Heart right ventricle (tissue), 16 donors: ENCODE measurements at regions of chr18 and their contacts with region 1.

Region 1: DNA sequence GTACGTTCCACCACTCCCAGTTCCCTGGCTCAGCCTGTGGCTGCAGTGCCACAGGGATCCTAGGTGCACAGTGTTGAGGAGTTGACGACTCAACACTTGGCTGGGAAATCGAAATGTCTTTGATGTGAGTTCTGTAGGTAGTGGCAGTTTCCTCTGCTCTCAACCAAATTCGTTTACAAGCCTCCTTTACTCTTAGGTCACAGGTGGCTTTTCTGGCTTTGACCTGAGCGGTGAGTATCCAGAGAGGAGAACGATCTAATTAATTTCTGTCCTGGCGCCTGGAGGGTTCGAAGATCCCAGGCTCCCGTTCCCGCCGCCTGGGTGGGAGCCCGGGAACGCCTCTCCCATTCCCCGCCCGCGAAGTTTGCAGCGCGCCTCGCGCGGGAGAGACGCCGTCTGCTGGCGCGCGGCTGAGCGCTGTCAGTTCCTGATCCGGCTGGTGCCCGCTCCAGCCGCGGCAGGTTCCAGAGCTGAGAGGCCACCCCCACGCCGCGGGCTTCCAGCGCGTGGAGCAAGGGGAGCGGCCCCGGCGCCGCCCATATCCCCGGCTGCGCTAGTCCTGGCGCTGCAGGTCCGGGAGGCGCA is at the start of gene LAMA3:
- DNase-seq: peak; percentile 45 to 71
- ATAC-seq: peak; percentile 88 to 94 (median 91)
- H3K4me3 ChIP-seq: peak within 1 kb of the TSS; percentile 53 to 76 (median 65)
- H3K27ac ChIP-seq: peak within 1 kb of the TSS in 9 of 10 donors; percentile 29 to 74 (median 53)
- H3K4me1 ChIP-seq: peaks cover 0 to 29% (median 19%) of the 10 kb centered on the region in 9 donors
- H3K27me3 ChIP-seq: peaks cover 0 to 32% (median 9%) of the 10 kb centered on the region in 7 donors
- CTCF ChIP-seq: peak in 6 of 9 donors; percentile 16 to 59 (median 48)
- total RNA-seq, gene LAMA3: 0.89 to 5.3 (median 3.3) TPM

Region 2: DNA sequence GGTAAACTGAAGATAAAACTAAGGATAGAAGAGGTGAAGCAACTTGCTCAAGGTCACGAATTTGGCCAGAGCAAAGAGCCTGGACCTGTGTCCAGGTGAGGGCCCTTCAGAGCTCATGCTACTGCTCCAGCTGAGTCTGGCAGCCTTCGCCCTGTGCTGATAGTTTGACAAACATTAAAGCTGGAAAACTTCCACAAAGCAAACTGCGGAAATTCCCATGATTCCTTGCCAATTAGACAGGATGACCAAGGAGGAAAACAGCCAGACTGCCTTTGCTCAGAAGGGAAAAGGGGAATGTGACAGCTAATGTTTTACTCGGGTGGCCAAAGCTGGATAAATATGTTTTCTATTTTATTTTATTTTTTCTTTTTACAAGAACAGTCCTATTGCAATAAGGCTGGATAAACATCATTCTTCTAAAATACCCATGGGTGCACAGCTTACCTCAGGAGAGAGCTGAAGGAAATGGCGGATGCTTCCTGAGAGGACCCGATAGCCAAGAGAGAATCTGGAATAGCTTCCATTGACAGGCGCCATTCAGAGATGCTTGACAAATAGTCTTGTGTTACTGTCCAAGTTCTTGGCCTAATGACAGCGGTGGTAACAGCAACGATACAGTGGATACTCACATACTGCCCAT is 1266.1 kb before region 1 on chr18:
- intact Hi-C with region 1: no loop called
- DNase-seq: peak; percentile 22 to 47
- ATAC-seq: peak in 7 of 8 donors; percentile 38 to 76 (median 46)
- H3K4me3 ChIP-seq: no peak overlapping the region
- H3K27ac ChIP-seq: peak overlapping the region in 8 of 10 donors; percentile 8 to 75 (median 45)
- H3K4me1 ChIP-seq: peaks cover 0 to 22% (median 14%) of the 10 kb centered on the region in 9 donors
- H3K27me3 ChIP-seq: no peaks in the 10 kb centered on the region
- CTCF ChIP-seq: no peak

Region 3: GRCh38 chr18:23337599-23338444 is 351.3 kb before region 1 on chr18:
- intact Hi-C with region 1: no loop called
- DNase-seq: no peak
- ATAC-seq: no peak
- H3K4me3 ChIP-seq: no peak overlapping the region
- H3K27ac ChIP-seq: no peak overlapping the region
- H3K4me1 ChIP-seq: peaks cover 0 to 23% (median 7%) of the 10 kb centered on the region in 9 donors
- H3K27me3 ChIP-seq: no peaks in the 10 kb centered on the region
- CTCF ChIP-seq: no peak

Region 4: GRCh38 chr18:23503038-23503962 is 185.8 kb before region 1 on chr18 and contains the start of gene RMC1:
- intact Hi-C with region 1: loop called in 1 of 10 experiments (anchors 10 kb)
- DNase-seq: peak; percentile 97 to 99
- ATAC-seq: peak; percentile 98 to 99 (median 99)
- H3K4me3 ChIP-seq: peak within 1 kb of the TSS; percentile 85 to 99 (median 96)
- H3K27ac ChIP-seq: peak within 1 kb of the TSS; percentile 57 to 96 (median 94)
- H3K4me1 ChIP-seq: peaks cover 0 to 44% (median 28%) of the 10 kb centered on the region in 9 donors
- H3K27me3 ChIP-seq: no peaks in the 10 kb centered on the region
- CTCF ChIP-seq: peak in 4 of 9 donors; percentile 10 to 33 (median 26)
- total RNA-seq, gene RMC1: 12.4 to 21.6 (median 14.5) TPM

Region 5: DNA sequence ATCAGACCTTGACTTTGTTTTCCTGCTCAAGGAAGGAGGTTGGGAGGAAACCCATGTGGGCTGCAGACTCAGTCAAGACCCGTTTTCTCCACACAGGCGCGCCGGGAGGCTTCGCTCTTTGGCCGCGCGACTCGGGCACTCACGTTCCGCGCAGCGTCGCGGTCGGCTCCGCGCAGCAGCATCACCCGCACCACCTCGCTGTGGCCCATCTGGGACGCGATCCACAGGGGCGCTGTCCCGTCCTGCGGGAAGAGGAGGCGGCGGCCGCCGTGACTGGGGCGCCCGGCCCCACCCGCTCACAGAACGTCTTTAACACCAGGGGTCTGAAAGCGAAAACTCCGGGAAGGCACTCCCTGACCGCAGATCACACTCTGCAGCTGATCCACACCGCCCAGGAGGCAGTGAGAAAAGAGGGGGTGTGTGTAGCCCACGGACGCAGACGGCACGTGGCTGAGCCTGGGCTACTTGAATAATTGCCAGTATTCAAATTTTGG is 69.7 kb before region 1 on chr18:
- intact Hi-C with region 1: loop called in 1 of 10 experiments (anchors 5 kb)
- DNase-seq: peak in 1 of 2 donors; percentile 35
- ATAC-seq: peak; percentile 42 to 79 (median 72)
- H3K4me3 ChIP-seq: peak overlapping the region in 9 of 10 donors; percentile 23 to 69 (median 55)
- H3K27ac ChIP-seq: peak overlapping the region in 5 of 10 donors; percentile 20 to 44 (median 36)
- H3K4me1 ChIP-seq: peaks cover 0 to 15% (median 10%) of the 10 kb centered on the region in 9 donors
- H3K27me3 ChIP-seq: peaks cover 0 to 35% (median 0%) of the 10 kb centered on the region in 7 donors
- CTCF ChIP-seq: peak in 1 of 9 donors; percentile 7

Region 6: DNA sequence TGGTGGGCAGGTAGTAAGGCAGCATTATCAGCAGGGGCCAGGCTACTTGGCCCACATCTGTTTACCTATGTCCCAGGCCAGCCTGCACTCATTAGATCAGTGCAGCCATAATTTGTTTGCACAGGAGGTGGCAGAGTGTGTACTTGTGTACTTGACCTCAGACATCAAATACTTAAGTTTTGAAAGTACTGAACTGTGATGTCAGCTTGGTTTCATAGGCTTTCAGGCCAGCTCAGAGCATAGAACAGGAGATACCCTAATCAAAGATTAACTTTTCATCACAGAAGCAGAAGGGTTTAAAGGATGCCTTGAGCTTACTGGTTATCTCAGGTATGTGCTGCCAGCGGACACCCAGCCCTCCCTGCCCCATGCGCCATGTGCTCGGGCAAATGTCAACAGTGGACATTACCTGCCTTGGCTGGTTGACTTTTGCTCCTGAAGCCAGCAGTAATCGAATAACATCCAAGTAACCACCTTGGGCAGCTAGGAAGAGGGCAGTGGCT is 59.6 kb before region 1 on chr18:
- intact Hi-C with region 1: loop called in 3 of 10 experiments (anchors 5 kb)
- DNase-seq: no peak
- ATAC-seq: no peak
- H3K4me3 ChIP-seq: no peak overlapping the region
- H3K27ac ChIP-seq: no peak overlapping the region
- H3K4me1 ChIP-seq: peaks cover 0 to 21% (median 8%) of the 10 kb centered on the region in 9 donors
- H3K27me3 ChIP-seq: no peaks in the 10 kb centered on the region
- CTCF ChIP-seq: no peak

Region 7: GRCh38 chr18:23658296-23658695 is 30.8 kb before region 1 on chr18:
- intact Hi-C with region 1: loop called in 1 of 10 experiments (anchors 5 kb)
- DNase-seq: no peak
- ATAC-seq: no peak
- H3K4me3 ChIP-seq: no peak overlapping the region
- H3K27ac ChIP-seq: no peak overlapping the region
- H3K4me1 ChIP-seq: peaks cover 0 to 18% (median 6%) of the 10 kb centered on the region in 9 donors
- H3K27me3 ChIP-seq: peaks cover 0 to 48% (median 0%) of the 10 kb centered on the region in 7 donors
- CTCF ChIP-seq: no peak